ENCODE measurements at regions of chr14 and their contacts with region 1.

Region 1: DNA sequence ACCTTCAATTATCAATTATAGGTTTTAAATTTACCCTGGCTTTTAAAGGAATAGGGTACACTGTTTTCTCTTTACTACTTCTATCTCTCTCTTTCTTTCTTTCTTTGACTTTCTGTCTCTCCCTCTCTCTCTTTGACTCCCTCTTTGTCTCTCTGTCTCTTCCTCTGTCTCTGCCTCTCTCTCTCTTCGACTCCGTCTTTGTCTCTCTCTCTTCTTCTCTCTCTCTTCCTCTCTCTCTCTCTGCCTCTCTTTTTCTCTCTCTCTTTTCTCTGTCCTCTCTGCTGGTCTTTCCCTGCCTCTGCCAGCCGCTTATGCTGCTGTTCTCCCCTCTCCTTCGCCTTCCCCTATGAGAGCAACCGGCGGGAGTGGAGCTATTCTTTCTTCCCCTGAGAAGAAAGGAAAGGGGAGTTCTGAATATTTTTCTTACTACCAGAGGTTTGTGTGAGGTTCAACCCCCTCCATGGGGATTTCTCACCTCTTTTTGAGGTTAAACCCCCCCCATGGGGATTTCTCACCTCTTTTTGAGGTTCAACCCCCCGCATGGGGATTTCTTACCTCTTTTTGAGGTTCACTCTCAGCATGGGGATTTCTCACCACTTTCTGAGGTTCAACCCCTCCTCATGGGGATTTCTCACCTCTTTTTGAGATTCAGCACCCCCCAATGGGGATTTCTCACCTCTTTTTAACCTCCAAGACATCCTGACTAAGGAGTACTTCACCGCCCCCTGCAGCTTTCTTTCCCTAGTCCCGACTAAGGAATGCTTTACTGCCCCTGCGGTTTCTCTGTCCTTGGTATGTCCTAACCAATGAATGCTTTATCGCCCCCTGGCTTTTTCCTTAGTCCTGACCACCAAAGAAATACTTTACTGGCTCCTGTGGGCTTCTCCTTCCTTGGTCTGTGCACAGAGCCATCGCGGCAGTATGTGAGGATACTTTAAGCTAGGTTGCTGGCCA is 27.4 kb upstream of the DDHD1 start:
- DNase-seq: peak; percentile 75
- H3K4me3 Mint-ChIP-seq: peak overlapping the region; percentile 3
- H3K27ac Mint-ChIP-seq: peak overlapping the region; percentile 67
- H3K4me1 Mint-ChIP-seq: peaks cover 41% of the 10 kb centered on the region
- H3K27me3 Mint-ChIP-seq: no peaks in the 10 kb centered on the region

Region 2: DNA sequence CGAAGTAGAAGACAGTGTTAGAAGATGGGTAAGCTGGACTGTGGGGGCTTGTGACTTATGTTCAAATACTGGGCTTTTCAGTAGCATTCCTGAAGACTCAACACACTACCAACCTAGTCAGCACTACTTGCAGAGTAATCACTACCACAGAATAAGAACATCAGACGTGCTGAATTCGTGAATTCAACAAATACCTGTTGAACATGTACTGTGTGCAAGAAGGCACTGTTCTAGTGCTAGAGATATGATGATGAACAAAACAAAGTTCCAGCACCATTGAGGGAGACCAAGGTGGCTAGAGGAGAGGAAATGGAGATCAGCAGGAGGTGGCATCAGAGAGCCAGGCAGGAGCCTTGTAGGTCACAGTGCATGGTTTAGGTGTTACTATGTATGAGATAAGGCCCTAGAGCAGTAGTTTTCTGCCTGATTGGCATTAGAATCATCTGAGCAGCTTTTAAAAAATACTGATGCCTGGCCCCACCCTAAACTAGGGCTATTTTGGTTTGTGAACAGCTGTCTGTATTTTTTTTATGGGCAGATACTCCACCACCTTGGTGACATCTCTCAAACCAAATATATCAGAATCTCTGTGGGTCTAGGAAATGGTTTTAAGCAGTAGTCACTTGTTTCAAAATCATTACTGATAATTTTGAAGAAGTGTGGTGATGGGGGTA is 256.5 kb before region 1 on chr14:
- CTCF ChIA-PET with region 1: no interaction called
- POLR2A ChIA-PET with region 1: no interaction called
- intact Hi-C with region 1: no loop called
- DNase-seq: peak; percentile 15
- H3K4me3 Mint-ChIP-seq: no peak overlapping the region
- H3K27ac Mint-ChIP-seq: no peak overlapping the region
- H3K4me1 Mint-ChIP-seq: peaks cover 6% of the 10 kb centered on the region
- H3K27me3 Mint-ChIP-seq: peaks cover 2% of the 10 kb centered on the region

Region 3: GRCh38 chr14:53217295-53217994 is 36.9 kb after region 1 on chr14:
- CTCF ChIA-PET with region 1: no interaction called
- POLR2A ChIA-PET with region 1: interaction called, 3 read pairs
- intact Hi-C with region 1: loop called (anchors 5 kb)
- DNase-seq: peak; percentile 88
- H3K4me3 Mint-ChIP-seq: peak overlapping the region; percentile 80
- H3K27ac Mint-ChIP-seq: peak overlapping the region; percentile 52
- H3K4me1 Mint-ChIP-seq: peaks cover 5% of the 10 kb centered on the region
- H3K27me3 Mint-ChIP-seq: no peaks in the 10 kb centered on the region

Region 4: GRCh38 chr14:53265025-53265424 is 84.5 kb after region 1 on chr14:
- CTCF ChIA-PET with region 1: no interaction called
- POLR2A ChIA-PET with region 1: no interaction called
- intact Hi-C with region 1: no loop called
- DNase-seq: no peak
- H3K4me3 Mint-ChIP-seq: no peak overlapping the region
- H3K27ac Mint-ChIP-seq: no peak overlapping the region
- H3K4me1 Mint-ChIP-seq: no peaks in the 10 kb centered on the region
- H3K27me3 Mint-ChIP-seq: no peaks in the 10 kb centered on the region

Region 5: GRCh38 chr14:53368711-53369191 is 188.2 kb after region 1 on chr14:
- CTCF ChIA-PET with region 1: no interaction called
- POLR2A ChIA-PET with region 1: no interaction called
- intact Hi-C with region 1: no loop called
- DNase-seq: no peak
- H3K4me3 Mint-ChIP-seq: no peak overlapping the region
- H3K27ac Mint-ChIP-seq: no peak overlapping the region
- H3K4me1 Mint-ChIP-seq: no peaks in the 10 kb centered on the region
- H3K27me3 Mint-ChIP-seq: no peaks in the 10 kb centered on the region

Measured in activated CD4-positive, alpha-beta memory T cell treated with anti-CD3 and anti-CD28 coated beads for 36 hours (primary cell).